ENCODE measurements at regions of chr9 and their contacts with region 1.

Region 1: GRCh38 chr9:110256380-110257096 is at the start of gene TXN:
- DNase-seq: peak; percentile 92 to 100
- H3K4me3 ChIP-seq: peak within 1 kb of the TSS; percentile 79
- H3K27ac ChIP-seq: peak within 1 kb of the TSS; percentile 99
- H3K4me1 ChIP-seq: peaks cover 49% of the 10 kb centered on the region
- H3K27me3 ChIP-seq: no peaks in the 10 kb centered on the region
- CTCF ChIP-seq: no peak
- total RNA-seq, gene TXN: 1,110 and 1,260 TPM in 2 replicates

Region 2: DNA sequence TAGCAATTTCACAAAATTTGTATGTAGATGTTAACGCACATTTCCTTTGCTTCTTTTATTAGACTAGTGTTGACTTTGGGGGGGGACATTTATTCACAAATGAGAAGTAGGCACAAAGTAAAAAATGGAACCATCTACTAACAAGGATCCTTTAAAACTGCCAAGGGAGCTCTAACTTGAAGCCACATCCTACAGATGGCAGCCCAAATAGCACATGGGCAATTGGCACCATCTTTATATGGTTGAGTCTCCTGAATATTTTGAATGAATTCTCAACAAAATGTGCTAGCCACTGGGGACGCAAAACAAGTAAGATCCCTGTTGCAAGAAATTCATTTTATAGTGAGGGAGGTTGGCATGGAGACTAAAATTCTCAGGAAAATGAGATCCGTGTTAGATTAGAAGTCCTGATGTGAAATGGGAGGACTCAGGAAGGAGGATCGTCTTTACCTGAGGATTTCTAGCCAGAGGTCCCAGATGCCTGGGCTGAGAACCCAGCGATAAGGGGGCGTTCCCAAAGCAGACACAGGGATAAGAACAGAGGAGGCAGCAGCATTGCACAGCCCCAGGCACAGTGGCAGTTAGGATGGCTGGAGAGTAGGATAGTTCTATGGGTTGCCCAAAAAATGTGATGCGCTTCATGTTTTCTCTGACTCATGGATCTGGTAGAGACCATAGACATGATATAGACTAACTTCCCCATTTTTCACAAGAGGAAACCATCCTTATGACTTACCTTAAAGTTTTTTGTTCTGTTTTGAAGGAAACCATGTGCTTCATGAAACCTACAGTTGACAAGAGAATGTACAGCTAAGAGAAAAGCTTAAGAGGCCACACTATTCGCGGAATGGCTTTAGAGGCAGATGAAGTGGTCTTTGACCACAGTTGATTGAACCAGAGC is 85.9 kb before region 1 on chr9:
- CTCF ChIA-PET with region 1: no interaction called
- POLR2A ChIA-PET with region 1: no interaction called
- intact Hi-C with region 1: no loop called
- DNase-seq: no peak
- H3K4me3 ChIP-seq: no peak overlapping the region
- H3K27ac ChIP-seq: no peak overlapping the region
- H3K4me1 ChIP-seq: no peaks in the 10 kb centered on the region
- H3K27me3 ChIP-seq: no peaks in the 10 kb centered on the region
- CTCF ChIP-seq: no peak

Region 3: DNA sequence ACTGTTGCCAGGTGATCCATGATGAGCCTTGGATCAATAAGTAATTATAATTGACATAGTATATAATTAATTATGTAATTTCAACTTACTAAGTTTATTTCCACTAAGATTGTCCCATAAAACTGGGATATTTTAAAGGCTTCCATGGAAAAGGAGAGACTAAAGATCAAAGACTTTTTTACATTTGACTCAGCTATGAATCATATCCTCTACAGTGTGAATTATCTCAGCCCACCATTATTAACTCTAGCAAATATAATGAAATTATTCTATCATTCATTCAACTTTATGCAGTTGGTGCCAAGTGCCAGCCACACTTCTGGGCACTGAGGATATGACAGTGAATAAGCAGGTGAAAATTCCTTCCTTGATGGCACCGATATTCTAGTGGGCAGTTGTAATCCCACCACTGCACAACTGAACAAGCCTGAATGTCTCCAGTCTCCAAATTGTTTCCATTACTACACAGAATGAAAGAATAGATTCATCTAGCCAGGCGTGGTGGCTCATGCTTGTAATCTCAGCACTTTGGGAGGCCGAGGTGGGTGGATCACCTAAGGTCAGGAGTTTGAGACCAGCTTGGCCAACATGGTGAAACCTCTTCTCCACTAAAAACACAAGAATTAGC is 21.7 kb after region 1 on chr9:
- CTCF ChIA-PET with region 1: no interaction called
- POLR2A ChIA-PET with region 1: interaction called, 3 read pairs
- intact Hi-C with region 1: loop called (anchors 2 kb)
- DNase-seq: peak in 1 of 2 experiments; percentile 61
- H3K4me3 ChIP-seq: no peak overlapping the region
- H3K27ac ChIP-seq: peak overlapping the region; percentile 63
- H3K4me1 ChIP-seq: peaks cover 40% of the 10 kb centered on the region
- H3K27me3 ChIP-seq: no peaks in the 10 kb centered on the region
- CTCF ChIP-seq: no peak

Region 4: GRCh38 chr9:110344821-110345220 is 88.3 kb after region 1 on chr9:
- CTCF ChIA-PET with region 1: no interaction called
- POLR2A ChIA-PET with region 1: no interaction called
- intact Hi-C with region 1: no loop called
- DNase-seq: no peak
- H3K4me3 ChIP-seq: no peak overlapping the region
- H3K27ac ChIP-seq: no peak overlapping the region
- H3K4me1 ChIP-seq: no peaks in the 10 kb centered on the region
- H3K27me3 ChIP-seq: no peaks in the 10 kb centered on the region
- CTCF ChIP-seq: no peak

Region 5: GRCh38 chr9:110357505-110357904 is 101.0 kb after region 1 on chr9:
- CTCF ChIA-PET with region 1: no interaction called
- POLR2A ChIA-PET with region 1: no interaction called
- intact Hi-C with region 1: loop called (anchors 1 kb)
- DNase-seq: peak; percentile 46 to 96
- H3K4me3 ChIP-seq: no peak overlapping the region
- H3K27ac ChIP-seq: peak overlapping the region; percentile 57
- H3K4me1 ChIP-seq: peaks cover 23% of the 10 kb centered on the region
- H3K27me3 ChIP-seq: no peaks in the 10 kb centered on the region
- CTCF ChIP-seq: no peak

Region 6: GRCh38 chr9:110452227-110452801 is 195.8 kb after region 1 on chr9:
- CTCF ChIA-PET with region 1: interaction called, 17 read pairs
- POLR2A ChIA-PET with region 1: no interaction called
- intact Hi-C with region 1: no loop called
- DNase-seq: no peak
- H3K4me3 ChIP-seq: no peak overlapping the region
- H3K27ac ChIP-seq: no peak overlapping the region
- H3K4me1 ChIP-seq: no peaks in the 10 kb centered on the region
- H3K27me3 ChIP-seq: no peaks in the 10 kb centered on the region
- CTCF ChIP-seq: peak; percentile 68

Region 7: DNA sequence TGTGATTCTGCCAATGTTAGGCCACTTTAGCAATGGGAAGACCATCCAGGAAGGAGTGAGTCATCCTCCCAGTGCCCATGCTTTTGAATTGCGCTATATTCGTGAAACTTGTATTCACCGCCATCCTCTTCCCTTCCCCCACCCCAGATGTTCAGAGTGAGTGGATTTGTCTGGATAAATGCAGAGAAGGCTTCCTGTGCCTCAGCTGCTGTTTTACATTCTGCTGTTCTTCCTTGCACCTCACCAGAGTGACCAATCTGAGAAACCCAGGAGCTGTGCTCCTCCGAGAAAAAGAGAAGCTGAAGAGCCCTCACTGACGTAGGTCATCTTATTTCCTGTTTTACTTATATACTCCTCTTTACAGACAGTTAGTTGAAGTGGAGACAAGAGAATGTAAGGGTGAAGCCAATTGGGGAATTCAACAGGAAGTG is 347.6 kb after region 1 on chr9:
- CTCF ChIA-PET with region 1: no interaction called
- POLR2A ChIA-PET with region 1: interaction called, 10 read pairs
- intact Hi-C with region 1: loop called (anchors 5 kb)
- DNase-seq: no peak
- H3K4me3 ChIP-seq: no peak overlapping the region
- H3K27ac ChIP-seq: no peak overlapping the region
- H3K4me1 ChIP-seq: peaks cover 26% of the 10 kb centered on the region
- H3K27me3 ChIP-seq: no peaks in the 10 kb centered on the region
- CTCF ChIP-seq: no peak

Region 8: GRCh38 chr9:110744753-110745384 is 488.3 kb after region 1 on chr9:
- CTCF ChIA-PET with region 1: no interaction called
- POLR2A ChIA-PET with region 1: no interaction called
- intact Hi-C with region 1: loop called (anchors 2 kb)
- DNase-seq: peak; percentile 72 to 97
- H3K4me3 ChIP-seq: peak overlapping the region; percentile 2; the same call in 1 of the 2 replicates
- H3K27ac ChIP-seq: peak overlapping the region; percentile 87
- H3K4me1 ChIP-seq: peaks cover 48% of the 10 kb centered on the region
- H3K27me3 ChIP-seq: no peaks in the 10 kb centered on the region
- CTCF ChIP-seq: no peak

Measured in PC-9 (cell line).